ENCODE measurements at regions of chr5 and their contacts with region 1.

Region 1: DNA sequence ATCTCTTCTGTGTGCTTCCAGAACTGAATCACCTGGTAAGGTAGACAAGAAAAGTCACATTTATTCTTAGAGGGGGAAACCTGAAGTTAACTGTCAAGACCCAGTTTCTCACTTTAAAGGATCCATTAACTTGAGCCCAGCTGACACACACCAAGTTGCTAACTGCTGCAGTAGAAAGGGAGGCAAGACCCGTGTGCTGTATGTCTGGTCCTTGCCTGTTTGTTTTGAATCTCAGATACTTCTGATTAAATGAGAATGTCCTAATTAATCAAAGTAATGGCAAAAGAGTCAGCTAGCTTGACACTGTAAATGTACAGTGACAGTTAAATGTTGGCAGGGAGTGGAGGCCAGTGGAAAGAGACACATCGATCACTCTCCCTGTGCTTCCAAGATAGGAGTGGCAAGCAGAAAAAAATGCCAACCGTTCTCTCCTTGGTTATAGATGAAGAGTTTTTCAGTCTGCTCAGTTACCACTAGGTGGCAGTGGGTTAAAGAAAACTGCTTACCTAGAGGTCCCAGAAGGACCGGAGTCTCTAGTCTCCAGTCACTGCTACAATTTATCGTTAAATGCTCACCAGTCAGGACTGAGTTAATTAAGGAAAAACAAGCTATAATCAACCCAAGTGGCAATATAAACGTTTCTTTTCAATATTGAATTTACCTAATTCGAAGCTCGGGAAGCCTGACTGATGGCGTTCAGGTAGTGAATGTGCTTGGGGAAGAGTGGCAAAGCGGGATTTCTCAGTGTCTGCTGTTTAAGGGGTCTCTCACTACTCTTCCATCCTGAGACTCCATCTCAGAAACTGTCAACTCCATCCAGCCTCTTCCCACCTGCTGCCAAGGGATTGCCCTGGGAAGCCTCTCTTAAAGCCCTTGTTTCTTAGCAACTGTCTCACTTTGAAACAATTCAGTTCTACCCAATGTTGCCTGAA is 18.4 kb downstream of the LSM11 start:
- DNase-seq: peak; percentile 67 to 72
- ATAC-seq: peak; percentile 94 to 98
- H3K4me3 ChIP-seq: no peak overlapping the region
- H3K27ac ChIP-seq: no peak overlapping the region
- H3K4me1 ChIP-seq: no peaks in the 10 kb centered on the region
- CTCF ChIP-seq: peak; percentile 88
- EP300 ChIP-seq: no peak
- POLR2A ChIP-seq: no peak
- RAD21 ChIP-seq: peak; percentile 77 to 82

Region 2: GRCh38 chr5:157592594-157592993 is 169.4 kb before region 1 on chr5:
- CTCF ChIA-PET with region 1: no interaction called
- POLR2A ChIA-PET with region 1: no interaction called
- DNase-seq: no peak
- ATAC-seq: no peak
- H3K4me3 ChIP-seq: no peak overlapping the region
- H3K27ac ChIP-seq: no peak overlapping the region
- H3K4me1 ChIP-seq: no peaks in the 10 kb centered on the region
- CTCF ChIP-seq: no peak
- EP300 ChIP-seq: no peak
- POLR2A ChIP-seq: no peak
- RAD21 ChIP-seq: no peak

Region 3: GRCh38 chr5:157748760-157749461 is 13.0 kb before region 1 on chr5:
- CTCF ChIA-PET with region 1: interaction called, 78 read pairs
- POLR2A ChIA-PET with region 1: no interaction called
- DNase-seq: peak in 1 of 2 experiments; percentile 20
- ATAC-seq: 0 out of 6 replicates have a peak, but pooled peaks of 1 of the 2 experiments have one; percentile 37
- H3K4me3 ChIP-seq: no peak overlapping the region
- H3K27ac ChIP-seq: no peak overlapping the region
- H3K4me1 ChIP-seq: peaks cover 15% of the 10 kb centered on the region
- CTCF ChIP-seq: no peak
- EP300 ChIP-seq: no peak
- POLR2A ChIP-seq: no peak
- RAD21 ChIP-seq: no peak

Region 4: GRCh38 chr5:157772127-157772526 is 10.2 kb after region 1 on chr5:
- CTCF ChIA-PET with region 1: interaction called, 20 read pairs
- POLR2A ChIA-PET with region 1: no interaction called
- DNase-seq: no peak
- ATAC-seq: no peak
- H3K4me3 ChIP-seq: no peak overlapping the region
- H3K27ac ChIP-seq: no peak overlapping the region
- H3K4me1 ChIP-seq: 0 out of 3 replicates have a peak, but pooled peaks cover 4% of the 10 kb centered on the region
- CTCF ChIP-seq: no peak
- EP300 ChIP-seq: no peak
- POLR2A ChIP-seq: no peak
- RAD21 ChIP-seq: no peak

Region 5: DNA sequence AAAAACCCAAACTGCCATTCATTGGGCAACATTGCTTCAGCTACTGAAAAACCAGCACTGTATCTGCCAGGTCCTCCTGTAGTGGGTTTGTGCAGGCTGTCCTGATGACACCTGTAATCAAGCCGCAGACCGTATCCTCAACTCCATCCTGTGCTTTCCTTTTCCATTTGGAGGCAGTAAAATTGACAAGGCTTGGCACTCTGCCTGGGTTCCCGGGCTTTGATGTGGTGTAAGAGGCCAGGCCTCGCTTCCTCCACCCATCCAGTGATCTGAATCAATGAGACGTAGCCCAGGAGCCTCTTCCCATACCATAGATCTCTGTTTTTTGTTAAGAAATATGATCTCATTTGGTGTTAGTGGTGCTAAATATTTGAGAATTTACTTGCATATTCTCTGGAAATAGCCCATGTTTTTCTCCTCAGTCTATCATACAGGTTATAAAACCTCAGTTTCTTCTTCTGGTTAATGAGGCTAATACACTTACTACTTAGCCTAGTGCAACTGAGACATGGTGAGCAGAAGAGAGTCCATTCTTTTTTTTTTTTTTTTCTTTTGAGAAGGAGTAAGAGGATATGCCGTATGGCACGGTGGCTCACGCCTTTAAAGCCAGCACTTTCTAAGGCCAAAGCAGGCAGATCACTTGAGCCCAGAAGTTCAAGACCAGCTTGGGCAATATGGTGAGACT is 16.3 kb after region 1 on chr5:
- CTCF ChIA-PET with region 1: interaction called, 20 read pairs
- POLR2A ChIA-PET with region 1: no interaction called
- DNase-seq: no peak
- ATAC-seq: no peak
- H3K4me3 ChIP-seq: no peak overlapping the region
- H3K27ac ChIP-seq: no peak overlapping the region
- H3K4me1 ChIP-seq: no peaks in the 10 kb centered on the region
- CTCF ChIP-seq: no peak
- EP300 ChIP-seq: no peak
- POLR2A ChIP-seq: no peak
- RAD21 ChIP-seq: no peak

Measured in A549 (cell line).